HEK293 (cell line): ENCODE measurements at regions of chr13 and their contacts with region 1.

Region 1: GRCh38 chr13:48720621-48721020 is 66.9 kb downstream of the CYSLTR2 start:
- H3K4me3 ChIP-seq: no peak overlapping the region
- H3K27ac ChIP-seq: no peak overlapping the region
- H3K4me1 ChIP-seq: no peaks in the 10 kb centered on the region
- CTCF ChIP-seq: no peak

Region 2: DNA sequence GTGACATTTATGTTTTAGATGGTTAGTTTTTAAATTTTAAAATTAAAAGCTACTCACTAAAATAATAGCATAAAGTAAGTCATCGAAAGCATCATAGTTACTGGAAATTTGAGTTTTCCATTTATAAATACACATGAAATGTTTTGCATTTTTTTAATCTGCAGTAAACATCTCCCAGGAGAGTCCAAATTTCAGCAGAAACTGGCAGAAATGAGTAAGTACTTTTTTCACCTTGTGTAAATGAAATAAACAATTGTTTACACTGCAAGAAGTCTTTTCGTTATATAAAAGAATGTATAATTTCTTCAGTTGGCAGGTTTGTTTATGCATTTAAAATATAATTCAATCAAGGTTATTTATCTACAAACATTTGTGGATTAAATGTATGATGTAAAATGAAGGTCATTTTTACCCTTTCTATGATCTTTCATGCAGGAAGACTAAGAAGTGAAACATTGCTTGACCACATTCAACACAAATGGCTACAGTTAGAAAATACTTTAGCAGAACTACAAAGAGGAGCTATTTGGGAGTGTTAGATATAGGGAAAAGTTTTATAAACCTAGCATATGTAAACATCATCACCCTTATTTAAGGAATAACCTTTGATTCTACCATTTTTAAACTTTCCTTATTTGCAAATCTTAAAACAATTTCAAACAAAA is 243.3 kb before region 1 on chr13:
- CTCF ChIA-PET with region 1: no interaction called
- POLR2A ChIA-PET with region 1: no interaction called
- H3K4me3 ChIP-seq: no peak overlapping the region
- H3K27ac ChIP-seq: no peak overlapping the region
- H3K4me1 ChIP-seq: no peaks in the 10 kb centered on the region
- CTCF ChIP-seq: no peak

Region 3: GRCh38 chr13:48731957-48732569 is 11.4 kb after region 1 on chr13:
- CTCF ChIA-PET with region 1: interaction called, 13 read pairs
- POLR2A ChIA-PET with region 1: no interaction called
- H3K4me3 ChIP-seq: no peak overlapping the region
- H3K27ac ChIP-seq: no peak overlapping the region
- H3K4me1 ChIP-seq: no peaks in the 10 kb centered on the region
- CTCF ChIP-seq: no peak

Region 4: GRCh38 chr13:48828962-48829421 is 108.4 kb after region 1 on chr13:
- CTCF ChIA-PET with region 1: no interaction called
- POLR2A ChIA-PET with region 1: no interaction called
- H3K4me3 ChIP-seq: no peak overlapping the region
- H3K27ac ChIP-seq: no peak overlapping the region
- H3K4me1 ChIP-seq: no peaks in the 10 kb centered on the region
- CTCF ChIP-seq: no peak

Region 5: DNA sequence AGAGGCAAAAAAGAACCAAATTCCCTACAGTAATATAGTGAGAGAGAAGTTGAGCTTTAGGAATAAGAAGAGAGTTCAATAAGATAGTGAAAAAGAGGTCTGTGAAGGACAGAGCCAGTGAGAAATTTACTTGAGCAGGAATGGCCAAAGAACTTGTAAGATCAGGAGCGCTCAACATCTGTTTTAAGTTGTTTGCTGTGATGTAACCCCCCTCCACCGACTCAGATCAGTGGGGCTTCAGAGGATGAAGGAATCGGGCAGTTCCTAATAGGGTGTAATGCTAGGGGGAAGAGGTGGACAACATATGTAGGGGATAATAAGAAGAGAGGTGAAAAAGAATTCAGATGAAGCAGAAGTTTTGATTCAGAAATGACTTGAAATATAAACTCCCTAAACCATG is 169.8 kb after region 1 on chr13:
- CTCF ChIA-PET with region 1: no interaction called
- POLR2A ChIA-PET with region 1: no interaction called
- H3K4me3 ChIP-seq: no peak overlapping the region
- H3K27ac ChIP-seq: no peak overlapping the region
- H3K4me1 ChIP-seq: no peaks in the 10 kb centered on the region
- CTCF ChIP-seq: no peak

Region 6: DNA sequence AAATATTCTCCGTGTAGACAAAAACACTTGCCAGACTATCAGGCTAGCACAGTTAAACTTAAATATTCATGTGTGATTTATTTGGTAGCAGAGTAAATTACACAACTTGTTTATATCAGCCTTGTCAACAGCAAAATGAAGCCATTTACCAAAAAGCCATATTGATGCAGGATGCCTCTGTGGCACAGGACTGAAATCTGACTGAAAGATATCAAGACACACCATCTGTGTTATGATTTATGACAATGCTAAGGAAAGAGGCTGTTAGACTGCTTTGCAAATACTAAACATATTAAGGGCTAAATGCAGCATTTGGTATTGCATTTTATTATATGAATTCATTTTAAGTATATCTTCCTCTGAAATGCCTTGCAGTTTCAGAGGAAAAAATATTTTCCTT is 210.3 kb after region 1 on chr13:
- CTCF ChIA-PET with region 1: no interaction called
- POLR2A ChIA-PET with region 1: no interaction called
- H3K4me3 ChIP-seq: no peak overlapping the region
- H3K27ac ChIP-seq: no peak overlapping the region
- H3K4me1 ChIP-seq: no peaks in the 10 kb centered on the region
- CTCF ChIP-seq: no peak